H1 (cell line): ENCODE measurements at regions of chr10 and their contacts with region 1.

Region 1: GRCh38 chr10:103685880-103686669 is 169.3 kb downstream of the SH3PXD2A start:
- DNase-seq: peak; percentile 50 to 97
- H3K4me3 ChIP-seq: no peak overlapping the region
- H3K27ac ChIP-seq: no peak overlapping the region
- H3K4me1 ChIP-seq: peaks cover 0 to 10% (median 4%) of the 10 kb centered on the region in 4 experiments; a peak in 3 of 7 replicates
- H3K27me3 ChIP-seq: peaks cover 0 to 4% (median 0%) of the 10 kb centered on the region in 4 experiments; a peak in 1 of 7 replicates
- CTCF ChIP-seq: peak; percentile 96 to 98 (median 97)
- EP300 ChIP-seq: no peak
- POLR2A ChIP-seq: no peak
- RAD21 ChIP-seq: peak; percentile 92 to 98

Region 2: GRCh38 chr10:103350501-103351260 is 335.4 kb before region 1 on chr10 and contains the start of gene PCGF6:
- CTCF ChIA-PET with region 1: no interaction called
- POLR2A ChIA-PET with region 1: no interaction called
- DNase-seq: peak; percentile 70 to 96
- H3K4me3 ChIP-seq: peak within 1 kb of the TSS; percentile 72 to 83 (median 76)
- H3K27ac ChIP-seq: peak within 1 kb of the TSS; percentile 45; the same call in 1 of the 2 replicates
- H3K4me1 ChIP-seq: peaks cover 0 to 3% (median 1%) of the 10 kb centered on the region in 4 experiments; a peak in 4 of 7 replicates
- H3K27me3 ChIP-seq: no peaks in the 10 kb centered on the region
- CTCF ChIP-seq: no peak
- EP300 ChIP-seq: no peak
- POLR2A ChIP-seq: peak in 1 of 2 experiments; percentile 56; a peak in 2 of 3 replicates
- RAD21 ChIP-seq: no peak
- total RNA-seq, gene PCGF6: 16.2 and 18.6 TPM in 2 replicates

Region 3: GRCh38 chr10:103612462-103613365 is 73.4 kb before region 1 on chr10:
- CTCF ChIA-PET with region 1: interaction called, 114 read pairs
- POLR2A ChIA-PET with region 1: no interaction called
- DNase-seq: no peak
- H3K4me3 ChIP-seq: no peak overlapping the region
- H3K27ac ChIP-seq: no peak overlapping the region
- H3K4me1 ChIP-seq: no peaks in the 10 kb centered on the region
- H3K27me3 ChIP-seq: no peaks in the 10 kb centered on the region; a peak in 1 of 7 replicates
- CTCF ChIP-seq: no peak
- EP300 ChIP-seq: no peak
- POLR2A ChIP-seq: no peak
- RAD21 ChIP-seq: no peak

Region 4: GRCh38 chr10:103637927-103638557 is 48.0 kb before region 1 on chr10:
- CTCF ChIA-PET with region 1: interaction called, 336 read pairs
- POLR2A ChIA-PET with region 1: interaction called, 3 read pairs
- DNase-seq: no peak
- H3K4me3 ChIP-seq: no peak overlapping the region
- H3K27ac ChIP-seq: no peak overlapping the region
- H3K4me1 ChIP-seq: peaks cover 8 to 35% (median 27%) of the 10 kb centered on the region in 4 experiments
- H3K27me3 ChIP-seq: no peaks in the 10 kb centered on the region
- CTCF ChIP-seq: no peak
- EP300 ChIP-seq: no peak
- POLR2A ChIP-seq: no peak
- RAD21 ChIP-seq: no peak

Region 5: DNA sequence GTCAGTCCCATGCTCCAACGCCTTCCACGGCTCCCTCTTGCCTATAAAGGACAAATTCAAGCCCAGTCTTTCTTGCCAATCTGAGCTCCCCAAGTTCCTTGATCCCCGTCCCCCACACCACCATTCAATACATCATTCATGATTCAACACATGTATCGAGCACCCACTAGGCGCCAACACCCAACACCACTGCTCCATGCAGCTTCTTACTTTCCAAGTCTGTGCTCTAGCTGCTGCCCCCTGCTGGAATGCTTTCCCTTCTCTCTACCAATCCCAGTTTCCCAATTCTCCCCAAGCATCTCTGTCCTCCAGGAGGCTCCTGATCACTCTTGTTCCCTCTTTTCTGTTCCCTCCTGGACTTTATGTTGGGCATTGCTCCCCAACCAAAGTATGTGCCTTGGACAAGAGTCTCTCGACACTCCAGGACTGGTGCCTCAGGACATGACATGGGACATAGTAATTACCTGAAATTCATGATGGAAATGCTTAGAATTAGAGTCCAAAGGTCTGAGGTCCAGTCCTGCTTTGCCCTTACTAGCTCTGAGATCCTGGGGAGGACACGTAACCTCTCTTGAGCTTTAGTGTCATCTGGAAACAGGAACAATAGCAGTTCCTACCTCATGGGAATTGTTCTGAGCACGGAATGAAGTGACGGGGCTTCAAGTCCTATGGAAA is 19.9 kb before region 1 on chr10:
- CTCF ChIA-PET with region 1: interaction called, 336 read pairs
- POLR2A ChIA-PET with region 1: interaction called, 7 read pairs
- DNase-seq: peak in 1 of 2 experiments; percentile 76
- H3K4me3 ChIP-seq: no peak overlapping the region
- H3K27ac ChIP-seq: no peak overlapping the region
- H3K4me1 ChIP-seq: peaks cover 10 to 27% (median 17%) of the 10 kb centered on the region in 4 experiments
- H3K27me3 ChIP-seq: no peaks in the 10 kb centered on the region; a peak in 1 of 7 replicates
- CTCF ChIP-seq: peak; percentile 43 to 71 (median 64)
- EP300 ChIP-seq: no peak
- POLR2A ChIP-seq: no peak
- RAD21 ChIP-seq: peak; percentile 26 to 58; a peak in 3 of 4 replicates

Region 6: DNA sequence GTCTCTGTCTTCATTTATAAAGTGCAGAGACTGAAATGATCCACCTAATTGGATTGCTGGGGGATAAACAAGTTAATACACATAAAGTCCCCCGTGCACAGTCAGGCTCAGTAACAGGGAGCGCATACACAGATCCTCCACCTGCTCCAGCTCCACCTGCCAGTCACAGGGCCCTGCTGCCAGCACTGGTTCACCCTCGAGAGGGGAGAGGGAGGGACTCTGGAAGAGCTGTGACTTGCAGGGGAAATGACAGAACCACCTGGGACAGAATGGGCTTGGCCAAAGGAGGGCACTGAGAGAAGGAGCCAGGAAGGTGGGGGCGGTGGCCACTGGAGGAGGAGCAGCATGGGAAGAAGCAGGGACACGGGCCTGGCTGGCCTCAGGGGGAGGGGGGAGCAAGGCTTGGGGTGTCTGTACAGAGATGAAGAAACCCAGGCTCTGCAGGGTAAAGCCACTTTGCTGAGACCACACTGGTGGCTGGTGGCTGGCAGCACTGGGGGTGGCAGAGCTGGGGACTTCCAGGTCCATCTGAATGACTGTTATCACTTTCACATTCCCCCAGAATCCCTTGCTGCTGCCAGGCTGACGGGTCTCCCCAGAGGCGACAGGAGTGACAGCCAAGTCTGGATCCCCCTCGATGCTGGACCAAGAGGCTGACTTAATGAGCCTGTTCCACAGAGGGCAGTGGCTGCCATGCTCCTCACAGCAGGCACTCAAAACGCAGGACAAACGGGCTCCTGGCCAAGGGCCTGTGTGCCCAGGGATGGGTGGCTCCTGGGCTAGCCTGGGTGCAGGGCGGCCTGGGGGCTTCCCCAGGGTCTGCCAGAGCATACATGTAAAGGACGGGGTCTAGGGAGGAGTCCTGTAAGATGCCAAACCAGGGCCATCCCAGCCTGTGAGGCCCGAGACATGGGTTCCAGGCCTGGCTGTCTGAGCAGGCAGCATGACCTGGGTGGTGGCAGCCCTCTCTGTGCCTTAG is 18.2 kb after region 1 on chr10:
- CTCF ChIA-PET with region 1: interaction called, 19 read pairs
- POLR2A ChIA-PET with region 1: interaction called, 4 read pairs
- DNase-seq: no peak
- H3K4me3 ChIP-seq: no peak overlapping the region
- H3K27ac ChIP-seq: no peak overlapping the region
- H3K4me1 ChIP-seq: peaks cover 0 to 2% (median 0%) of the 10 kb centered on the region in 4 experiments; a peak in 2 of 7 replicates
- H3K27me3 ChIP-seq: no peaks in the 10 kb centered on the region
- CTCF ChIP-seq: no peak
- EP300 ChIP-seq: no peak
- POLR2A ChIP-seq: no peak
- RAD21 ChIP-seq: no peak